ENCODE measurements at regions of chr1 and their contacts with region 1.

Region 1: GRCh38 chr1:47179017-47179987 is 10.5 kb downstream of the PDZK1IP1 start:
- DNase-seq: peak; percentile 86 to 95
- H3K4me3 ChIP-seq: peak overlapping the region; percentile 54
- H3K27ac ChIP-seq: 0 out of 2 replicates have a peak overlapping the region, but pooled peaks have one; percentile 5
- H3K4me1 ChIP-seq: peaks cover 10% of the 10 kb centered on the region
- H3K27me3 ChIP-seq: no peaks in the 10 kb centered on the region
- CTCF ChIP-seq: peak; percentile 89

Region 2: DNA sequence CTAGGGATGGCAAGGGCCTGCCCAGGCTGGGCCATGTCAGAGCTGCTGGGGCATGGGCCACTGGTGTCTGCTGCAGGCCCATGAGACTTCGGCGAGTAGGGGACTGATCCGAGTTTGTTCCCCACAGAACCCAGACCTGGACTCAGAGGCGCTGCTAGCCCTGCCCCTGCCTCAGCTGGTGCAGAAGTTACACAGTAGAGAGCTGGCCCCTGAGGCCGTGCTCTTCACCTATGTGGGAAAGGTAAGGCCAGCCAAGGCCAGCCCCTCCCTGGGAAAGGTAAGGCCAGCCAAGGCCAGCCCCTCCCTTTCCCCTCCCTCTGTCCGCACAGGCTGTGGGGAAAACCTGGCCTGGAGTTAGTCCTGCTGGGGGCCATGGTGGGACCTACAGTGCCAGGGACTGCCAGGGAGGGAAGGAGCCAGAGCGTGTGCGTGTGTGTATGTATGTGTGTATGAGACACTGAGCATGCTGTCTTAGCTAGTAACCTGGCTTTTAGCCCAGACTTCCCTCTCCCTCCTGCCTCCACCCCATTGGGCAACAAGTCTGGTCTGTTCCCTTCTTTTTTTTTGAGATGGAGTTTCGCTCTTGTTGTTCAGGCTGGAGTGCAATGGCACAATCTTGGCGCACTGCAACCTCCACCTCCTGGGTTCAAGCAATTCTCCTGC is 777.2 kb before region 1 on chr1:
- CTCF ChIA-PET with region 1: interaction called, 6 read pairs
- POLR2A ChIA-PET with region 1: no interaction called
- intact Hi-C with region 1: loop called (anchors 10 kb)
- DNase-seq: peak; percentile 67 to 88
- H3K4me3 ChIP-seq: no peak overlapping the region
- H3K27ac ChIP-seq: no peak overlapping the region
- H3K4me1 ChIP-seq: peaks cover 8% of the 10 kb centered on the region; the same call in 1 of the 2 replicates
- H3K27me3 ChIP-seq: no peaks in the 10 kb centered on the region
- CTCF ChIP-seq: no peak

Region 3: DNA sequence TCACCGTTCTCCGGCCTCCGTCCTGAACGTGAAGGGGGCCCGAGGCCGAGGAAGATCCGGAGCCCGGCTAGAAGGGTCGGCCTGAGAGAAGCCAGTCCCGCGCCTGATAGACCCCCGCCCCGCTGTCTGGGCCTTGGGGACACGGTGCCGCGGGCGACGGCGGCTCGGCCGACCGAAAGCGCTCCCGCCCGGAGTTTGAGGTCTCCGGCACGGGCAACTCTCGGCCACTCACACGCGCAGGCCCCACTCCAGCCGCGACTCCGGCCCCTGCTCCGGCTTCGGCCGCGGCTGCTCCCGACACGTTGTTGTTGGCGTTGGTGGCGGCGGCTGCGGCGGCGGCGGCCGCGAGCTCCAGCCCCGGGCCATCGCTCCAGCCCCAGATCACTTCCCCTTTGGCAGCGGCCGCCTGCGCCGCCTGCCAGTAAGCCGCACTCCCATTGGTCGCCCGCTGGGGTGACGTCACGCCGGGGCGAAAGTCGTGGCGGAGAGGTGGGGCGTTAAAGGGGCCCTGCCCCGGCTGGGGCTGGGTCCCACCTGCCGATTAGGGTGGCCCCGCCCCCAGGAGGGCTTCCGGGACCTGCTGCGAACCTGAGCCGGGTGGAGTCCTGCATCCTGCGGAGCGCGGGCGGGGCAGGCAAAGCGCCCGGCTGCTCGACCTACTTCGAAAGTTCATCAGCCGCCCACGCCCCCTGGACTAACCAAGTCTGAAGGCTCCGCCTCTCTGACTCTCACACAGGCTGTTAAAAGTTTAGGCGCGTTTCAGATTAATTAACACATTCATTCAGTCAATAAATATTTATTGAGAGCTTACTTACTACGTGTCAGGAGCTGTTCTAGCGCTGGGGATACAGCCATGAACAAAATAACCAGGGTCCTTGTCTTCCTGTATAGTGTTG is 460.3 kb before region 1 on chr1 and contains the start of gene EFCAB14:
- CTCF ChIA-PET with region 1: no interaction called
- POLR2A ChIA-PET with region 1: no interaction called
- intact Hi-C with region 1: loop called (anchors 10 kb)
- DNase-seq: peak; percentile 91 to 100
- H3K4me3 ChIP-seq: peak within 1 kb of the TSS; percentile 82
- H3K27ac ChIP-seq: peak within 1 kb of the TSS; percentile 88
- H3K4me1 ChIP-seq: peaks cover 53% of the 10 kb centered on the region
- H3K27me3 ChIP-seq: no peaks in the 10 kb centered on the region
- CTCF ChIP-seq: no peak
- total RNA-seq, gene EFCAB14: 71.1 and 95.4 TPM in 2 replicates

Region 4: DNA sequence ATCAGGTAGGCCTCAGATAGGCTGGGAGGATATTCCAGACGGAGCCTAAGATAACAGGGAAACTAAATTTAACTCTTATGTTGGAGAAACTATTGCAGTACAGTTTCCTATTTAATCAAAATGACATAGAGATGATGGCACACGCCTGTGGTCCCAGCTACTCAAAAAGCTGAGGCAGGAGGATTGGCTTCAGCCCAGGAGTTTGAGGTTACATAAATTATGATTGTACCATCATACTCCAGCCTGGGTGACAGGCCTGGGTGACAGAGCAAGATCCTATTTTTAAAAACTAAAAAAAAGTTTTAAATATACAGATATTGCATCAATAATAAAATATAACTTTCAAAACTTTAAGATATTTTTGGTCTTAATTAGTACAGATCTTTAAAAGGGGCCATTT is 77.9 kb after region 1 on chr1:
- CTCF ChIA-PET with region 1: interaction called, 30 read pairs
- POLR2A ChIA-PET with region 1: no interaction called
- intact Hi-C with region 1: loop called (anchors 2 kb)
- DNase-seq: no peak
- H3K4me3 ChIP-seq: no peak overlapping the region
- H3K27ac ChIP-seq: no peak overlapping the region
- H3K4me1 ChIP-seq: peaks cover 9% of the 10 kb centered on the region
- H3K27me3 ChIP-seq: no peaks in the 10 kb centered on the region
- CTCF ChIP-seq: no peak

Region 5: DNA sequence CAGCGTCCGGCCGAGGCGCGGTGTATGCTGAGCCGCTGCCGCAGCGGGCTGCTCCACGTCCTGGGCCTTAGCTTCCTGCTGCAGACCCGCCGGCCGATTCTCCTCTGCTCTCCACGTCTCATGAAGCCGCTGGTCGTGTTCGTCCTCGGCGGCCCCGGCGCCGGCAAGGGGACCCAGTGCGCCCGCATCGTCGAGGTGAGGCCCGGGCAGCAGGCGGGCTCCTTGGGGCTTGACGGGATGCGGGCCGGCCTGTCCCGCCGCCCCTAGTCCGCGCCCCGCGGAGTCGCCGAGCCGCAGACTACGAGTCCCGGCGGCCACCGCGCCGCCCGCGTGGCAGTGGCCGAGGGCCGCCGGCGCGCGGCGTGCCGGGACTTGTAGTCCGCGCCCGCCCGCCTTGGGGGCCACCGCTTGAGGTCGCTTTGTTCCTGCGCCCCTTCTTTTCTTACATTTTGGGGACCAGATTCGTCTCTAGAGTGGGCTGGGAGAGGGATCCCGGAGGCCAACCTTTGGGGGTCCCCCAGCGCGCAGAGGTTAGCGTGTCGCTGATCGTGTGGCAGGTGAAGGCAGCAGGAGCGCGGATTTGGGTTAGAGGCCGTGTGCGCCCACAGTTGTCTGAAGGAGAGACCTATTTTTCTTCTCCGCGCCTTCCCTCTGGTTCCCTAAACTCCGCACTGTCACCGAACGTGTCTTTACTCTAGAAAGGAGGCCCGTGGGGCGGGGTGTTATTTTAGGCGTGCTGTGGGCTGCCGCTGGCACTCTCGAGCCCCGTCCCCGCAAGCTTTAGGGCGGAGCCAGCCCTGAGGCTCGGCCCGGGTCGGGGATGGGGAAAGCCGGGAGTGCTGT is 154.8 kb after region 1 on chr1:
- CTCF ChIA-PET with region 1: interaction called, 10 read pairs
- POLR2A ChIA-PET with region 1: no interaction called
- intact Hi-C with region 1: no loop called
- DNase-seq: peak; percentile 62 to 77
- H3K4me3 ChIP-seq: peak overlapping the region; percentile 96
- H3K27ac ChIP-seq: peak overlapping the region; percentile 93
- H3K4me1 ChIP-seq: peaks cover 30% of the 10 kb centered on the region
- H3K27me3 ChIP-seq: no peaks in the 10 kb centered on the region
- CTCF ChIP-seq: no peak; the same call in 1 of the 2 replicates

Region 6: GRCh38 chr1:47437447-47438164 is 258.3 kb after region 1 on chr1 and contains the start of gene FOXD2:
- CTCF ChIA-PET with region 1: interaction called, 12 read pairs
- POLR2A ChIA-PET with region 1: interaction called, 3 read pairs
- intact Hi-C with region 1: loop called (anchors 1 kb)
- DNase-seq: peak; percentile 77 to 94
- H3K4me3 ChIP-seq: peak within 1 kb of the TSS; percentile 68
- H3K27ac ChIP-seq: peak within 1 kb of the TSS; percentile 56
- H3K4me1 ChIP-seq: 0 out of 2 replicates have a peak, but pooled peaks cover 6% of the 10 kb centered on the region
- H3K27me3 ChIP-seq: no peaks in the 10 kb centered on the region
- CTCF ChIP-seq: peak; percentile 86
- total RNA-seq, gene FOXD2: 0.35 and 0.48 TPM in 2 replicates

Measured in PC-9 (cell line).